ENCODE measurements at regions of chr2 and their contacts with region 1.

Region 1: GRCh38 chr2:182980115-182980514 is 58.1 kb downstream of the NCKAP1 start:
- DNase-seq: no peak
- H3K4me3 Mint-ChIP-seq: no peak overlapping the region
- H3K27ac Mint-ChIP-seq: no peak overlapping the region
- H3K4me1 Mint-ChIP-seq: no peaks in the 10 kb centered on the region
- H3K27me3 Mint-ChIP-seq: no peaks in the 10 kb centered on the region

Region 2: DNA sequence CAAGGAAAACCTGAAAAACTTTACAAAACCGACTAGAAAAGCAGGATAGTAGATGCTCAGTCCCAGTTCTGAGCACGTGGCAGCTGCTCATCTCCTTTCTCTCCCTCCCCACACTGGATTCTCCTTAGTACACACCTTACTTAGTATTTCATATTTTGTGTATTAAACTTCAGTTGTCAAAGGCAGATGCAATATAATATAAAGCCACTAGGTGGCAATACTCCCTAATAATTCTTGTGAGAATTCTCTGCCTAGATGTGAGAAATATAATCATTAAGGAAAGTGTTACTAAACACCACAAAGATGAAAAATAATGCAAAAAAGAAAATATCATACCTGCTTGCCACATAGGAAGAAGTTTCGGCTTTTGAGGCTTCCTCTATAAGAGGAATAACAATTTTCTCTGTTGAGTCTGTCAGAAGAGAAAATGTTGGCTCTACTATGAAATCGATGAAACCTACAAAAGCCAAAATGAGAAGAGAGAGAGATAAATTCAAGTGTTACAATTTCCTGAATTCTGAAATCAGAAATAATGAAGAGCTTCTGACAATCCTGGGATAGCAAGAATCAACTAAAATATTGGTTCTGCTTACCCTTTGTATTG is 793.9 kb before region 1 on chr2:
- intact Hi-C with region 1: loop called (anchors 1 kb)
- DNase-seq: no peak
- H3K4me3 Mint-ChIP-seq: no peak overlapping the region
- H3K27ac Mint-ChIP-seq: no peak overlapping the region
- H3K4me1 Mint-ChIP-seq: no peaks in the 10 kb centered on the region
- H3K27me3 Mint-ChIP-seq: peaks cover 5% of the 10 kb centered on the region

Region 3: GRCh38 chr2:182666674-182667314 is 313.3 kb before region 1 on chr2:
- intact Hi-C with region 1: loop called (anchors 1 kb)
- DNase-seq: peak; percentile 10
- H3K4me3 Mint-ChIP-seq: no peak overlapping the region
- H3K27ac Mint-ChIP-seq: no peak overlapping the region
- H3K4me1 Mint-ChIP-seq: peaks cover 5% of the 10 kb centered on the region
- H3K27me3 Mint-ChIP-seq: peaks cover 5% of the 10 kb centered on the region

Region 4: GRCh38 chr2:182784777-182785176 is 195.3 kb before region 1 on chr2:
- intact Hi-C with region 1: loop called (anchors 1 kb)
- DNase-seq: no peak
- H3K4me3 Mint-ChIP-seq: no peak overlapping the region
- H3K27ac Mint-ChIP-seq: no peak overlapping the region
- H3K4me1 Mint-ChIP-seq: no peaks in the 10 kb centered on the region
- H3K27me3 Mint-ChIP-seq: no peaks in the 10 kb centered on the region

Region 5: DNA sequence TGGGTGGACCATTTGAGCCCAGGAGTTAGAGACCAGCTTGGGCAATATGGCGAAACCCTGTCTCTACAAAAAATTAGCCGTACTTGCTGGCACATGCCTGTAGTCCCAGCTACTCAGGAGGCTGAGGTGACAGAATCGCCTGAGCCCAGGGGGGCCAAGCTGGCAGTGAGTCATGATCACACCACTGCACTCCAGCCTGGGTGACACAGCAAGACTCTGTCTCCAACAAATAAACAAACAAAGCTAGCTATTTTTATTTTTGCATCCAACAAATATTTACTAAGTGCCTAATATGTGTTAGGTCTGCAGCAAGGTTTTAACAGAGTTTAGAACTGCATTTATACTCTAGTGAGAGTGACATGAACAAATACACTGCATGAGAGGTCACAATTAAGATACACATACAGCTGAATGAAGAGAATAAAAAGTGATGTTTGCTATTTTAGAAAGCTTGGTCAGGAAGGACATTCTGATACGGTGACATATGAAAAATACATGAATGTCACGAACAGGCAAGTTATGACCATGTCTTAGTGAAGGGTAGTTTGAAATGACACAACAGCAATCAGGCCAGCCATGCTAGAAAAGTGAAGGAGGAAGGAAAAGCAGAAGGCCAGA is 30.4 kb before region 1 on chr2:
- intact Hi-C with region 1: loop called (anchors 2 kb)
- DNase-seq: no peak
- H3K4me3 Mint-ChIP-seq: no peak overlapping the region
- H3K27ac Mint-ChIP-seq: no peak overlapping the region
- H3K4me1 Mint-ChIP-seq: peaks cover 32% of the 10 kb centered on the region
- H3K27me3 Mint-ChIP-seq: no peaks in the 10 kb centered on the region

Region 6: DNA sequence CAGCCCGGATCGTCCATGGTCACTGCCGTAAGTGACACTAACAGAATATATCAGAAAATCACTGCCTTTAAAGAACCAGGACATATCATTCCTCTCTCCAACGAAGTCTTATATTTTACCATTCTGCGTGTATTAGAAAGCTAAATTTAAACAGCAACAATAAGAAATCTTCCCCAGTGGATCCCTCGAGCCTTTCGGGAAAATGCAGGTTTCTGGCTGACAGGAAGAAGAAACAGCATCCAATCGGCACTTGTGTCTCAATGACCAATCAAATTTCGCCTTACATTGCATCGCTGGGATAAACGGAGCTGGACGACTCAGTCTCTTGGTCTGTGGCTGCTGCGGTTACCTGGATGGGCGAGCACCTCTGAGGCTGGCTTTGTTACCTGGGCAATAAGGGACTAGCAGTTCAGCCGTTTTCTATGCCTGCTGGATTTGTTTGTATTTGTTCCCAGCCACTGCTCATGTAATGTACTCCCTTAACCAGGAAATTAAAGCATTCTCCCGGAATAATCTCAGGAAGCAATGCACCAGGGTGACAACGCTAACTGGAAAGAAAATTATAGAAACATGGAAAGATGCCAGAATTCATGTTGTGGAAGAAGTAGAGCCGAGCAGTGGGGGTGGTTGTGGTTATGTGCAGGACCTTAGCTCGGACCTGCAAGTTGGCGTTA is 98.5 kb after region 1 on chr2 and contains the start of gene DUSP19:
- intact Hi-C with region 1: no loop called
- DNase-seq: peak; percentile 78
- H3K4me3 Mint-ChIP-seq: peak within 1 kb of the TSS; percentile 91
- H3K27ac Mint-ChIP-seq: peak within 1 kb of the TSS; percentile 41
- H3K4me1 Mint-ChIP-seq: peaks cover 15% of the 10 kb centered on the region
- H3K27me3 Mint-ChIP-seq: peaks cover 7% of the 10 kb centered on the region
- total RNA-seq, gene DUSP19: 1.0 and 1.7 TPM in 2 replicates